ENCODE measurements at regions of chr3 and their contacts with region 1.

Region 1: GRCh38 chr3:135992072-135992471 is 26.5 kb downstream of the PPP2R3A start:
- DNase-seq: peak in 1 of 2 experiments; percentile 57
- H3K4me3 ChIP-seq: no peak overlapping the region
- H3K27ac ChIP-seq: 0 out of 2 replicates have a peak overlapping the region, but pooled peaks have one; percentile 4
- H3K4me1 ChIP-seq: peaks cover 16% of the 10 kb centered on the region
- H3K27me3 ChIP-seq: no peaks in the 10 kb centered on the region
- CTCF ChIP-seq: no peak

Region 2: GRCh38 chr3:134898181-134898754 is 1093.8 kb before region 1 on chr3:
- CTCF ChIA-PET with region 1: no interaction called
- POLR2A ChIA-PET with region 1: interaction called, 10 read pairs
- intact Hi-C with region 1: no loop called
- DNase-seq: no peak
- H3K4me3 ChIP-seq: no peak overlapping the region
- H3K27ac ChIP-seq: no peak overlapping the region
- H3K4me1 ChIP-seq: no peaks in the 10 kb centered on the region
- H3K27me3 ChIP-seq: peaks cover 42% of the 10 kb centered on the region
- CTCF ChIP-seq: no peak

Region 3: GRCh38 chr3:135337192-135337591 is 654.9 kb before region 1 on chr3:
- CTCF ChIA-PET with region 1: no interaction called
- POLR2A ChIA-PET with region 1: no interaction called
- intact Hi-C with region 1: no loop called
- DNase-seq: no peak
- H3K4me3 ChIP-seq: no peak overlapping the region
- H3K27ac ChIP-seq: no peak overlapping the region
- H3K4me1 ChIP-seq: no peaks in the 10 kb centered on the region
- H3K27me3 ChIP-seq: no peaks in the 10 kb centered on the region; the same call in 1 of the 2 replicates
- CTCF ChIP-seq: no peak

Region 4: DNA sequence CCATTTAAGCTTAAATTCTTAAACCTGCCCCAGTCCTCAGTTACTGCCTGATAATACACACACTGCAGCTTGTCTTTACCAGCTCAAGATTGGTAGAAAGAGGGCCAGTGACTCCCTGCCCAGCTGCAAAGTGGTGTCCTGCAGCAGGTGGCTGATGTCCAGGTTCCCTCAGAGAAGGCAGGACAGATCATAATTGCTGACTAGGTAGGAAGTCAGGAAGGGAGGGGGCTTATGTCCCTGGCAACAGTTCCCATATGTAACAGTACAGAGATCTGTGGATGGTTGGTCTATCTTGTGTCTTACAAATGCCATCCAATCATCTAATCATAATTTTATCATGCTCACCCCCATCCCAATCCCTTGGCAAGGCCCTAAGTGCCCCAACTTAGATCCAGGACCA is 518.6 kb before region 1 on chr3:
- CTCF ChIA-PET with region 1: no interaction called
- POLR2A ChIA-PET with region 1: no interaction called
- intact Hi-C with region 1: no loop called
- DNase-seq: no peak
- H3K4me3 ChIP-seq: no peak overlapping the region
- H3K27ac ChIP-seq: no peak overlapping the region
- H3K4me1 ChIP-seq: no peaks in the 10 kb centered on the region
- H3K27me3 ChIP-seq: no peaks in the 10 kb centered on the region
- CTCF ChIP-seq: no peak

Region 5: DNA sequence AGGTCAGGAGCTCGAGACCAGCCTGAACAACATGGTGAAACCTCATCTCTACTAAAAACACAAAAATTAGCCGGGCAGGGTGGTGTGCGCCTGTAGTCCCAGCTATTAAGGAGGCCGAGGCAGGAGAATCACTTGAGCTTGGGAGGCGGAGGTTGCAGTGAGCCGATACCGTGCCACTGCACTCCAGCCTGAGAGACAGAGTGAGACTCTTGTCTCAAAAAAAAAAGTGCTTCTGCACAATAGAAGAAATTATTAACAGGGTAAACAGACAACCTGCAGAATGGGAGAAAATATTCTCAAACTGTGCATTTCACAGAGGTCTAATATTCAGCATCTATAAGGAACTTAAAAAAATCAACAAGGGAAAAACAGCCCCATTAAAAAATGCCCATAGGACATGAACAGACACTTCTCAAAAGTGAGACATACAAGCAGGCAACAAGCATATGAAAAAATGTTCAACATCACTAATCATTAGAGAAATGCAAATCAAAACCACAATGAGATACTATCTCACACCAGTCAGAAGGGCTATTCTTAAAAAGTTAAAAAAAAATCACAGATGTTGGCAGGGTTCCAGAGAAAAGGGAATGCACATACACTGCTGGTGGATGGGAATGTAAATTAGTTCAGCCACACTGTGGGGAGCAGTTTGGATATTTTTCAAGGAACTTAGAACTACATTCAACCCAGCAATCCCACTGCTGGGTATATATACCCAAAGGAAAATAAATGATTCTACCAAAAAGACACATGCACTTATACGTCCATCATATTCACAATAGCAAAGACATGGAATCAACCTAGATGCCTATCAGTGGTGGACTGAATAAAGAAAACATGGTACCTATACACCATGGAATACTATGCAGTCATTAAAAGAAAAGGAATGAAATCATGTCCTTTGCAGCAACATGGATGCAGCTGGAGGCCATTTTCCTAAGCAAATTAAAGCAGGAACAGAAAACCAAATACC is 128.6 kb after region 1 on chr3:
- CTCF ChIA-PET with region 1: no interaction called
- POLR2A ChIA-PET with region 1: no interaction called
- intact Hi-C with region 1: no loop called
- DNase-seq: no peak
- H3K4me3 ChIP-seq: no peak overlapping the region
- H3K27ac ChIP-seq: no peak overlapping the region
- H3K4me1 ChIP-seq: no peaks in the 10 kb centered on the region
- H3K27me3 ChIP-seq: no peaks in the 10 kb centered on the region
- CTCF ChIP-seq: no peak

Region 6: GRCh38 chr3:136277634-136278033 is 285.6 kb after region 1 on chr3:
- CTCF ChIA-PET with region 1: no interaction called
- POLR2A ChIA-PET with region 1: no interaction called
- intact Hi-C with region 1: no loop called
- DNase-seq: peak; percentile 36 to 63
- H3K4me3 ChIP-seq: no peak overlapping the region
- H3K27ac ChIP-seq: no peak overlapping the region
- H3K4me1 ChIP-seq: no peaks in the 10 kb centered on the region
- H3K27me3 ChIP-seq: no peaks in the 10 kb centered on the region
- CTCF ChIP-seq: no peak

Measured in PC-9 (cell line).